ENCODE measurements at regions of chr2 and their contacts with region 1.

Region 1: DNA sequence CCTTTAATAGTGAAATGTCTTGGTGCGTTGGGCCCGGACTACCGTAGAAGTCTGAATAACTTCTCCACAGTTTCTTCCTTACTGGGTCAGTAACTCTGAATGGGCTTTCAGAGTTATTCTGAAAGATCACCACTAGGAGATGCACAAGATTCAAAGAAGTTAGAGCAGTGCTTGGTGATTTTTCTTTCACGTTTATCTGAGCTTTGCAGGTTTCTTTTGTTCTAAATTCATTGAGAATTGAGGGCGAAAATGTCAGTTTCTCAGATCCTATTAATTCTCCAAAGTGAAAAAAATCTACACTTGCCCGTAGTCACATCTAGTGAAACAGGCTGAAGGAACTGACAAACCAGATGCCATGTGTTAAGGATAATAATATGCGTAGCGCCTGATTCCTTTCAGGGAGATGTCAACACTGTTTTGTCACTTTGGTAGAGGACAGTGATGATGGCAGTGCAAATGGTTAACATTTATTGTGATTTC is 70.1 kb downstream of the QPCT start:
- DNase-seq: peak; percentile 53

Region 2: GRCh38 chr2:37394796-37395555 is 19.5 kb before region 1 on chr2:
- CTCF ChIA-PET with region 1: interaction called, 10 read pairs
- POLR2A ChIA-PET with region 1: no interaction called
- DNase-seq: no peak

Region 3: GRCh38 chr2:37832590-37833197 is 418.2 kb after region 1 on chr2:
- CTCF ChIA-PET with region 1: interaction called, 22 read pairs
- POLR2A ChIA-PET with region 1: no interaction called
- DNase-seq: peak; percentile 69

Region 4: GRCh38 chr2:37877457-37878315 is 463.2 kb after region 1 on chr2:
- CTCF ChIA-PET with region 1: interaction called, 22 read pairs
- POLR2A ChIA-PET with region 1: no interaction called
- DNase-seq: peak; percentile 50

Region 5: DNA sequence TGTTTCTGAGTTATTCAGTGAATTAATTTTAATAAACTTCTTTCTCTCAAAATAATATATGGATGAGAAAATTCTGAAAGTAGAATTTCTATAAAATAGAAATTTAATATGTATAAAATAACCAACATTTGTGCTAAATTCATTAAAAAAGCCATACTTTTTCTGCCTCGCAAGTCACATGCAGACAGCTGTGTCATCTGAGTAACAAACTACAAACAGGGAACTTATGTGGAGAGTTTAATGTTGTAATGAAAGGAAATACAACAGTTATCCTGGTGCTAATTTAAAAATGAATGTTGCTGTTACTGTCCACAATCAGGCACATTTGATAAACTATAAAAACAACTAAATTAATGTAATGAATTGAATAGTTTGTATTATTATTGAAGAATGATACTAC is 532.8 kb after region 1 on chr2:
- CTCF ChIA-PET with region 1: interaction called, 12 read pairs
- POLR2A ChIA-PET with region 1: no interaction called
- DNase-seq: no peak